ENCODE measurements at regions of chr1 and their contacts with region 1.

Region 1: GRCh38 chr1:30085811-30086770 is 637.3 kb downstream of the MATN1 start:
- DNase-seq: no peak
- H3K4me3 ChIP-seq: peak overlapping the region; percentile 11 to 45 (median 22)
- H3K27ac ChIP-seq: no peak overlapping the region
- H3K4me1 ChIP-seq: peaks cover 22 to 36% (median 35%) of the 10 kb centered on the region in 4 donors
- H3K27me3 ChIP-seq: peaks cover 0 to 49% (median 4%) of the 10 kb centered on the region in 4 donors
- CTCF ChIP-seq: peak; percentile 62 to 76 (median 66)
- EP300 ChIP-seq: no peak
- POLR2A ChIP-seq: no peak

Region 2: DNA sequence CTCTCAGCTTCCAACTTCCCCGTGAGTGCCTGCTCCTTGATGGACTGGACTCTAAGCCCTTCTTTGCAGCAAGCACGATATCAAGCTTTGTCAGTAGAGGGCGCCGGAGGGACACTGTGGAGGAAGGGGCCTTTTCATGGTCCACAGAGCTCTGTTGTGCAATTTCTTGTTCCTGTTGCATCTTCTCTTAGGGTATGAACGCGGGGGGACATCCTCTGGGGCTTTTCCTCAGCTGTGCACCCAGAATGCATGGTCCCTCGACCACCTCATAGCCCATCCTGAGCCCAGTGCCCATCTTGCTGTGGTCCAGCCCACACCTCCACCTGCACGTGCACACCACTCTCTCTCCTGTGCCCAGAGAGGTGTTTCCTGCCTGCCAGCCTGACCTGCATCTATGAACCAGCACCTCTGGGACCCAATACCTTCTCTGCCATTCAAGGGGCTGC is 293.0 kb before region 1 on chr1:
- intact Hi-C with region 1: loop called (anchors 10 kb)
- DNase-seq: peak; percentile 94
- H3K4me3 ChIP-seq: no peak overlapping the region
- H3K27ac ChIP-seq: no peak overlapping the region
- H3K4me1 ChIP-seq: no peaks in the 10 kb centered on the region
- H3K27me3 ChIP-seq: peaks cover 0 to 27% (median 0%) of the 10 kb centered on the region in 4 donors
- CTCF ChIP-seq: peak; percentile 59 to 80 (median 68)
- EP300 ChIP-seq: no peak
- POLR2A ChIP-seq: no peak

Region 3: GRCh38 chr1:30274976-30275621 is 189.0 kb after region 1 on chr1:
- intact Hi-C with region 1: no loop called
- DNase-seq: no peak
- H3K4me3 ChIP-seq: no peak overlapping the region
- H3K27ac ChIP-seq: no peak overlapping the region
- H3K4me1 ChIP-seq: no peaks in the 10 kb centered on the region
- H3K27me3 ChIP-seq: peaks cover 0 to 64% (median 0%) of the 10 kb centered on the region in 4 donors
- CTCF ChIP-seq: no peak
- EP300 ChIP-seq: no peak
- POLR2A ChIP-seq: no peak

Measured in esophagus muscularis mucosa (tissue), 4 donors.